ENCODE measurements at regions of chr7 and their contacts with region 1.

Region 1: GRCh38 chr7:127733986-127734385 is 82.0 kb downstream of the SND1 start:
- DNase-seq: no peak
- ATAC-seq: no peak
- H3K4me3 Mint-ChIP-seq: no peak overlapping the region
- H3K27ac Mint-ChIP-seq: no peak overlapping the region
- H3K4me1 Mint-ChIP-seq: peaks cover 19% of the 10 kb centered on the region
- H3K27me3 Mint-ChIP-seq: no peaks in the 10 kb centered on the region
- CTCF ChIP-seq: no peak

Region 2: GRCh38 chr7:127598318-127598717 is 135.7 kb before region 1 on chr7:
- CTCF ChIA-PET with region 1: no interaction called
- POLR2A ChIA-PET with region 1: no interaction called
- intact Hi-C with region 1: no loop called
- DNase-seq: no peak
- ATAC-seq: no peak
- H3K4me3 Mint-ChIP-seq: no peak overlapping the region
- H3K27ac Mint-ChIP-seq: no peak overlapping the region
- H3K4me1 Mint-ChIP-seq: no peaks in the 10 kb centered on the region
- H3K27me3 Mint-ChIP-seq: peaks cover 2% of the 10 kb centered on the region
- CTCF ChIP-seq: no peak

Region 3: DNA sequence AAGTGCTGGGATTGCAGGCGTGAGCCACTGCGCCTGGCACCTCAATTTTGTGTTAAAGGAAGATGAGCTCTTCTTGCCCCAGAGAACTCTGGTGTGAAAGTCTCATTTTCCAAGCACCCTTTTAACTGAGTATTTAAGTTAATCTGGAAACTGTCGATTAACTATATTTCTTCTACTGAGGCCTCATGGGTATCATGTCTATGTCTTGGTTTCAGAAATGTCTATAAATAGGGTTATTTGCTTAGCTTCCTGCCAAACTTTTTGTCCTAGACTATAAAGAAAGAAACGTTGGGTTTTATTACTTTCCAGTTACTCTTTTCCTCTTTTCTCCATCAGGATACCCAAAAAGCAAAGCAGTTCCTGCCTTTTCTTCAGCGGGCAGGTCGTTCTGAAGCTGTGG is 194.9 kb after region 1 on chr7:
- CTCF ChIA-PET with region 1: no interaction called
- POLR2A ChIA-PET with region 1: interaction called, 12 read pairs
- intact Hi-C with region 1: no loop called
- DNase-seq: no peak
- ATAC-seq: no peak
- H3K4me3 Mint-ChIP-seq: peak overlapping the region; percentile 72
- H3K27ac Mint-ChIP-seq: peak overlapping the region; percentile 57
- H3K4me1 Mint-ChIP-seq: peaks cover 67% of the 10 kb centered on the region
- H3K27me3 Mint-ChIP-seq: no peaks in the 10 kb centered on the region
- CTCF ChIP-seq: no peak

Measured in activated B cell treated with CpG ODN at 0.5 μM for 24 hours (primary cell).